ENCODE measurements at regions of chr19 and their contacts with region 1.

Region 1: GRCh38 chr19:44002566-44003460 is at the start of gene ZNF230:
- DNase-seq: peak; percentile 95
- H3K4me3 Mint-ChIP-seq: peak within 1 kb of the TSS; percentile 97
- H3K27ac Mint-ChIP-seq: peak within 1 kb of the TSS; percentile 96
- H3K4me1 Mint-ChIP-seq: peaks cover 15% of the 10 kb centered on the region
- H3K27me3 Mint-ChIP-seq: no peaks in the 10 kb centered on the region
- total RNA-seq, gene ZNF230: 2.4 and 4.5 TPM in 2 replicates

Region 2: GRCh38 chr19:43934985-43935708 is 67.7 kb before region 1 on chr19 and contains the start of gene ZNF45:
- intact Hi-C with region 1: loop called (anchors 2 kb)
- DNase-seq: peak; percentile 96
- H3K4me3 Mint-ChIP-seq: peak within 1 kb of the TSS; percentile 92
- H3K27ac Mint-ChIP-seq: peak within 1 kb of the TSS; percentile 94
- H3K4me1 Mint-ChIP-seq: peaks cover 10% of the 10 kb centered on the region
- H3K27me3 Mint-ChIP-seq: no peaks in the 10 kb centered on the region
- total RNA-seq, gene ZNF45: 9.4 and 10.3 TPM in 2 replicates

Region 3: GRCh38 chr19:44025217-44025936 is 22.6 kb after region 1 on chr19 and contains the start of gene ZNF222:
- intact Hi-C with region 1: loop called (anchors 1 kb)
- DNase-seq: peak; percentile 92
- H3K4me3 Mint-ChIP-seq: peak within 1 kb of the TSS; percentile 99
- H3K27ac Mint-ChIP-seq: peak within 1 kb of the TSS; percentile 91
- H3K4me1 Mint-ChIP-seq: peaks cover 16% of the 10 kb centered on the region
- H3K27me3 Mint-ChIP-seq: no peaks in the 10 kb centered on the region
- total RNA-seq, gene ZNF222: 1.1 and 1.8 TPM in 2 replicates

Region 4: DNA sequence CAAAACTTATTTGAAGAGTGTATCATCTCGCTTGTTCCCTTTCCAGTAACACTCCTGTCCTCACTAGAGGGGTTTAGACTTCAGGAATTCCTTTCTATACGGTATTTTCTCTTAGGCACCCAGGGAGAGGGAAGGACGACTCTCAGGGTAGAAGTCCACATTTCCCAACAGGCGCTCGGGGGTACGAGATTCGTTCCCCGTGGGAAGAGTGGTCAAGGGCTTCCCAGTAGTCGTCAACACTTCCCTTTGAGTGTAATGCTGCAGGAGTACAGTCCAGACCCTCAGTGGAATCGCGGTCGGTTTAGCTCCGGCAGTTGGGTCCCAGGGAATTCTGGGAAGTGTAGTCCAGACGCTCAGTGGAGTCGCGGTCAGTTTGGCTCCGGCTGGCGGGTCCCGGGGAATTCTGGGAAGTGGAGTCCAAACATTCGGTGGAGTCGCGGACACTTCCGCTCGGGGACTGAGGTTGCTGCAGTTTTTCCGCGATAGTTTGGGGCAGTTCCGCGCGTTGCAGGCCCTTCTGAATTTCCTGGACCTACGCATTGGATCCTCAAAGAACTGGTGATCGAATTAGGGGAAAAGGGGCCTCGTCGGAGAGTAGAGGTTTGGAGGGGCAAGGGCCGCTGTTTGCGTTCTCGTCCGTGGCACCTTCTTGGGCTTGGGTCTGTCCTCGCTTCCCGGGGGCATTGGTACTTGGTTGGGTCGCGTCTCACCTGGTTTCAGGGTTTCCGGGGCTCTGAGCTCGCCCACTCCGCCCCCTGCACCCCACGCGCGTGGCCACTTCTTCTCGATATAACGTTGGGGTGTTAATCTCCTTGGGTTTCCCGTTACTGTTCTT is 91.3 kb after region 1 on chr19 and contains the start of gene ZNF224:
- intact Hi-C with region 1: loop called (anchors 5 kb)
- DNase-seq: peak; percentile 94
- H3K4me3 Mint-ChIP-seq: peak within 1 kb of the TSS; percentile 98
- H3K27ac Mint-ChIP-seq: peak within 1 kb of the TSS; percentile 91
- H3K4me1 Mint-ChIP-seq: peaks cover 14% of the 10 kb centered on the region
- H3K27me3 Mint-ChIP-seq: no peaks in the 10 kb centered on the region
- total RNA-seq, gene ZNF224: 17.0 and 17.4 TPM in 2 replicates

Region 5: DNA sequence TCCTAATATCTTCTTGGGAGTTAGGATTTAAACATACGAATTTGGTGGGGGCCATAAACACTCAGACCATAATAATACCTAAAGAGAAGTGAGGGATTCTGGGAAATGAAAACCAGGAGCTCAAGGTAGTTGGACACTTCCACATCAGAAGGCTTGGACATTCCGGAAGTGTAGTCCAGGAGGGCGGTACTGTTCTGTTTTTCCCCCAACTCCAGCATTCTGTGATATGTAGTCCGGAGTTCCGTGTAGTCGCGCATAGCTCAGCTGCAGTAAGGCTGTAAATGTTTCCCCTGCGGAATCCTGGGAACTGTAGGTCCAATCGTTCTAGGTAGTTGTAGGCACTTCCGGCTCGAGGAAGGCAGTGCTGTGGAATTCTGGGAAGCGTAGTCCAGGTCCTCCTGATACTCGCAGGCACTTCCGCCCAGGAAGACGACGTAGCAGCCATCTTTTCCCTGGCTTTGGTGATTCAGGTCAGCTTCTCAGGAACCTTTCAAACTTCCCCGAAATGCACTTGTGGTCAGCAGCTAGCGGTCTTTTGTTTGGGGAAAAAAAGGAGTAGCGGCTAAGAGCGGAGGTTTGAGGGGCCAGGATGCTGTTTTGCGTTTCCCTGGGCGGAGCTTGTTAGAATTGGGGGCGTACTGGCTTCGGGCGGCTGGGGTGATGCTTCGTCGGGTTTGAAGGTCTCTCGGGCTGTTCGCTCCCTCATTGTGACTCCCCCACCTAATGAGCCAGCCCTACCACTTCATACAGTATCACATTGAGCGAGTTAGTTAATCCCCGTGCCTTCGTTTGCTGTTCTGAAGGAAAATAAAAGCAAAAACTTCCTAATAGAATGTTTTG is 162.1 kb after region 1 on chr19 and contains the start of gene ZNF226:
- intact Hi-C with region 1: loop called (anchors 2 kb)
- DNase-seq: peak; percentile 93
- H3K4me3 Mint-ChIP-seq: peak within 1 kb of the TSS; percentile 98
- H3K27ac Mint-ChIP-seq: peak within 1 kb of the TSS; percentile 96
- H3K4me1 Mint-ChIP-seq: peaks cover 26% of the 10 kb centered on the region
- H3K27me3 Mint-ChIP-seq: no peaks in the 10 kb centered on the region
- total RNA-seq, gene ZNF226: 10.4 and 12.3 TPM in 2 replicates

Region 6: DNA sequence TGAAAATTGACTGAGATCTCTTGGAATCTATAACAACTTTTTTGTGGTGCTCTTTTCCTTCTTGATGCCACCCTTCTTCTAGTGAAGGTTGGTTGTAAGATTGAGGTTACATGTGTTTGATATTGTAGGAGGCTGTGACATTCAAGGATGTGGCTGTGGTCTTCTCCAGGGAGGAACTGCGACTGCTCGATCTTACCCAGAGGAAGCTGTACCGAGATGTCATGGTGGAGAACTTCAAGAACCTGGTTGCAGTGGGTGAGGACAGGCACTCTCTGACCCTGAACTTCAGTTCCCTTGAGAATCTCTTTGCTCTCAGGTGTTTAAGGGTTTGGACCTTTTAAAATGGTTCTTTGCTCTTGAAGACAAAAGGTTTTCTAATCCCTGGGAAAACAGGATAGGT is 225.5 kb after region 1 on chr19:
- intact Hi-C with region 1: no loop called
- DNase-seq: no peak
- H3K4me3 Mint-ChIP-seq: no peak overlapping the region
- H3K27ac Mint-ChIP-seq: no peak overlapping the region
- H3K4me1 Mint-ChIP-seq: no peaks in the 10 kb centered on the region
- H3K27me3 Mint-ChIP-seq: no peaks in the 10 kb centered on the region

Region 7: DNA sequence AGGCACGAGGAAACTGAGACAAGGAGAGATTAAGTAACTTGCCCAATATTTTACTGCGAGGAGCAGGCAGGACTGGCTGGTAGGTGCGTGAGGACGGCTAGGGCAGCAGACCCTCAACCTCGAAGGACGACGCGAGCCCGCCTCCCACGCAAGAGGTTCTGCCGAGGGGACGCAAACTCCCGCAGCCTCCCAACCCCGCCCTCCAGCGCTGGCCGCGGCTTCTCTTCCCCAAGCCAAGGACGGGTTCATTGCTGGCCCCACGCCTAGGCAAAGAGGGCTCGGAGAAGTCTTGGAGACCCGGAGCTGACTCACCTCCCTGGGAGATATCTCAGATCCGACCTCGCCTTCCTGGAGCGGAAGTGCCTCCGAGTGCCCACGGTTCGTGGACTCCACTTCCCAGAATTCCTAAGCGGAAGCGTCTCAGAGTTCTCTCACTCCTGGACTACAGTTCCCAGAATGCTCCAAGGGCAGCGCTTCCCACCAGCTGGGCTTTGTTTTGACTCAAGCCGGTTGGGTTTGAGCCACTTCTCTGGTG is 301.9 kb after region 1 on chr19 and contains the start of gene ZNF235:
- intact Hi-C with region 1: loop called (anchors 10 kb)
- DNase-seq: peak; percentile 90
- H3K4me3 Mint-ChIP-seq: peak within 1 kb of the TSS; percentile 90
- H3K27ac Mint-ChIP-seq: peak within 1 kb of the TSS; percentile 83
- H3K4me1 Mint-ChIP-seq: peaks cover 11% of the 10 kb centered on the region
- H3K27me3 Mint-ChIP-seq: no peaks in the 10 kb centered on the region
- total RNA-seq, gene ZNF235: 2.8 and 3.1 TPM in 2 replicates

Measured in activated CD4-positive, alpha-beta T cell treated with anti-CD3 and anti-CD28 coated beads, Interleukin-2, amount 10 ng/mL, durations not matched to agents 24 days and 14 days (primary cell).